ENCODE measurements at regions of chr6 and their contacts with region 1.

Region 1: GRCh38 chr6:12233693-12234571 is 56.2 kb upstream of the EDN1 start:
- DNase-seq: peak; percentile 84
- ATAC-seq: peak; percentile 90
- H3K4me3 ChIP-seq: no peak overlapping the region
- H3K27ac ChIP-seq: no peak overlapping the region
- H3K4me1 ChIP-seq: peaks cover 4% of the 10 kb centered on the region
- H3K27me3 ChIP-seq: no peaks in the 10 kb centered on the region
- CTCF ChIP-seq: peak; percentile 98
- POLR2A ChIP-seq: no peak
- RAD21 ChIP-seq: peak; percentile 88

Region 2: DNA sequence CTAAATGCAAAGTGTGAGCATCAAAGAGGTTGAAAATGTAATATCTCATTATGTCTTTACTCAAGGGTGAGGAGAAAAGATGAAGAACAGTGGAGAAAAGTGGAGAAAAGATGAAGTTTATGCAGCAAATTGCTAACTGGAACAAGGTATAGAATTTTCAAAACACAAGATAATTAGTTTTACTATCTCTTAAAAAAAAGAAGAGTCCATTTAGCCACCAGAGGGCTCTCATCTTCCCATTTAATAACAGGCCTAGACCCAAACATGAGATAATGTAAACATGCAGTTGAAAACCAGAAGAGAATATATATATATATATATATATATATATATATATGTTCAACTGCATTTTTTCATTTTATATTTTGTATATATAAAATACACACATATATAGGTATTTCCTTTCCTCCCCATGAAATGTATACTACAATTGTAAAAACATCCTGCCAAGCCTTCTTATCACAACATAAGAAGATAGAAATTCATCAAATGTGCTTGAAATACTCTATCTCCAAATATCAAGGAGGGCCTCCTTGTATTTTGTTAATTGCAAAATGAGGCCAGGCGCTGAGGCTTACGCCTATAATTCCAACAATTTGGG is 533.7 kb before region 1 on chr6:
- CTCF ChIA-PET with region 1: no interaction called
- POLR2A ChIA-PET with region 1: no interaction called
- dilution Hi-C with region 1: no loop called
- in situ Hi-C with region 1: no loop called
- intact Hi-C with region 1: loop called (anchors 1 kb)
- DNase-seq: peak; percentile 73
- ATAC-seq: peak; percentile 29; the same call in 1 of the 2 replicates
- H3K4me3 ChIP-seq: no peak overlapping the region
- H3K27ac ChIP-seq: no peak overlapping the region
- H3K4me1 ChIP-seq: peaks cover 6% of the 10 kb centered on the region; the same call in 1 of the 2 replicates
- H3K27me3 ChIP-seq: no peaks in the 10 kb centered on the region
- CTCF ChIP-seq: peak; percentile 64
- POLR2A ChIP-seq: no peak
- RAD21 ChIP-seq: peak; percentile 69

Region 3: DNA sequence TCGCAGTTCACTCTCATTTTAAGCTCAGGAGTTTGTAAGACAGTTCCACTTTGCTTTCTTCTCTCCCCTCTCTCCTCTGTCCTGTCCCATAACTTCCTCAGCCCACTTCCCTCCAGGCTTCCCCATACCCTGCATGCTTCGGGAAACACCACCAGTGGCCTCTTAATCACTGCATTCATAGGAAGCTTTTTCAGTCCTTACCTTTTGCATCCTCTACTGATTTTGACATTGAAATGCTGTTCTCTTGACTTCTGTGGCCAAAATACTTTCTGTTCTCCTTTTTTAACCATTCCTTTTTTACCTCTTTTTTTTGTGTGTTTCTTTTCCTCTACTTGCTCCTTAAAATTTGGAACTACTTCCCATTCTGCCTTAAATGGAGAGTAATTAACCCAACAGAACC is 152.2 kb before region 1 on chr6:
- CTCF ChIA-PET with region 1: no interaction called
- POLR2A ChIA-PET with region 1: no interaction called
- dilution Hi-C with region 1: no loop called
- in situ Hi-C with region 1: no loop called
- intact Hi-C with region 1: loop called (anchors 5 kb)
- DNase-seq: no peak
- ATAC-seq: no peak
- H3K4me3 ChIP-seq: no peak overlapping the region
- H3K27ac ChIP-seq: no peak overlapping the region
- H3K4me1 ChIP-seq: peaks cover 10% of the 10 kb centered on the region
- H3K27me3 ChIP-seq: no peaks in the 10 kb centered on the region
- CTCF ChIP-seq: no peak
- POLR2A ChIP-seq: no peak
- RAD21 ChIP-seq: no peak

Region 4: GRCh38 chr6:12147557-12148316 is 86.2 kb before region 1 on chr6:
- CTCF ChIA-PET with region 1: no interaction called
- POLR2A ChIA-PET with region 1: no interaction called
- dilution Hi-C with region 1: no loop called
- in situ Hi-C with region 1: no loop called
- intact Hi-C with region 1: loop called (anchors 5 kb)
- DNase-seq: peak; percentile 37
- ATAC-seq: peak; percentile 36
- H3K4me3 ChIP-seq: no peak overlapping the region
- H3K27ac ChIP-seq: peak overlapping the region; percentile 51; the same call in 1 of the 2 replicates
- H3K4me1 ChIP-seq: peaks cover 12% of the 10 kb centered on the region
- H3K27me3 ChIP-seq: no peaks in the 10 kb centered on the region
- CTCF ChIP-seq: peak; percentile 30; the same call in 1 of the 2 replicates
- POLR2A ChIP-seq: no peak
- RAD21 ChIP-seq: peak; percentile 18; the same call in 1 of the 2 replicates

Region 5: GRCh38 chr6:12275087-12275486 is 41.2 kb after region 1 on chr6:
- CTCF ChIA-PET with region 1: interaction called, 5 read pairs
- POLR2A ChIA-PET with region 1: interaction called, 19 read pairs
- dilution Hi-C with region 1: no loop called
- in situ Hi-C with region 1: no loop called
- intact Hi-C with region 1: no loop called
- DNase-seq: no peak
- ATAC-seq: no peak
- H3K4me3 ChIP-seq: no peak overlapping the region
- H3K27ac ChIP-seq: no peak overlapping the region
- H3K4me1 ChIP-seq: peaks cover 2% of the 10 kb centered on the region; the same call in 1 of the 2 replicates
- H3K27me3 ChIP-seq: no peaks in the 10 kb centered on the region
- CTCF ChIP-seq: no peak
- POLR2A ChIP-seq: no peak
- RAD21 ChIP-seq: no peak

Region 6: GRCh38 chr6:12605888-12606345 is 372.0 kb after region 1 on chr6:
- CTCF ChIA-PET with region 1: no interaction called
- POLR2A ChIA-PET with region 1: no interaction called
- dilution Hi-C with region 1: no loop called
- in situ Hi-C with region 1: no loop called
- intact Hi-C with region 1: loop called (anchors 1 kb)
- DNase-seq: peak; percentile 75
- ATAC-seq: peak; percentile 77
- H3K4me3 ChIP-seq: no peak overlapping the region
- H3K27ac ChIP-seq: no peak overlapping the region
- H3K4me1 ChIP-seq: peaks cover 9% of the 10 kb centered on the region
- H3K27me3 ChIP-seq: no peaks in the 10 kb centered on the region
- CTCF ChIP-seq: peak; percentile 81
- POLR2A ChIP-seq: no peak
- RAD21 ChIP-seq: peak; percentile 88